ENCODE measurements at regions of chr18 and their contacts with region 1.

Region 1: DNA sequence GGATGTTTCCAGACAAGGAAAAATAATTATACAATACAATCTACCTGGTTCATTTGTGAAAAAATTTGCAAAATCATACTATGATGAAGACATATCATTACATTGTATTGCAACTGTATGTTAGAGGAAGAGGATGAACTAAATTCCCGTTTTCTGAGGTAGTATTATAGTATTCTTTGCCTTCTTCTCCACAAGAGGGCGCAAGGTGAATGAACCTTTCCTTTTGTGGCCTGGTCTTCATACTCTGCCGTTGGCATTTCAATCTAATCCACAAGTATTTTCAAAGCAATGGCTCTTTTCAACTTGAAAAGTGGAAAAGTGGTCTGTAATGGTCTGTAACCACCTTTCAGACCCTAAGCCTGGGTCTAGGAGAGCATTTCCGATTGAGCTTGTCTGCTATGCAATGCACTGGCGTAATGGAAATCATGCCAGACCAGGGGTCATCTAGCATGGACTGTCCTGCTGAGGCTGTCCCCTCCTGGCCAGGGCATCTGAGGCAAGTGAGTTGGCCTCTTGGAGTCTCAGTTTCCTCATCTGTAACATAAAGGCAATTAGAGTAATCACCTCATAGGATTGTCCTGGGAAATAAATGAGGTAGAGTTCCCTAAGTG is 30.8 kb upstream of the ZNF396 start:
- DNase-seq: peak in 1 of 2 donors; percentile 68
- ATAC-seq: peak; percentile 71 to 92 (median 79)
- H3K4me3 ChIP-seq: no peak overlapping the region
- H3K27ac ChIP-seq: no peak overlapping the region
- H3K4me1 ChIP-seq: peaks cover 0 to 16% (median 0%) of the 10 kb centered on the region in 9 donors
- H3K27me3 ChIP-seq: no peaks in the 10 kb centered on the region
- CTCF ChIP-seq: peak; percentile 47 to 88 (median 85)

Region 2: GRCh38 chr18:35459005-35459441 is 51.0 kb after region 1 on chr18:
- intact Hi-C with region 1: no loop called
- DNase-seq: peak; percentile 65 to 77
- ATAC-seq: peak; percentile 83 to 97 (median 93)
- H3K4me3 ChIP-seq: no peak overlapping the region
- H3K27ac ChIP-seq: peak overlapping the region in 9 of 10 donors; percentile 56 to 76 (median 70)
- H3K4me1 ChIP-seq: peaks cover 12 to 64% (median 55%) of the 10 kb centered on the region in 9 donors
- H3K27me3 ChIP-seq: no peaks in the 10 kb centered on the region
- CTCF ChIP-seq: no peak

Region 3: GRCh38 chr18:35491700-35492077 is 83.7 kb after region 1 on chr18:
- intact Hi-C with region 1: loop called in 6 of 10 experiments (anchors 2 to 5 kb)
- DNase-seq: no peak
- ATAC-seq: peak in 6 of 8 donors; percentile 45 to 72 (median 64)
- H3K4me3 ChIP-seq: no peak overlapping the region
- H3K27ac ChIP-seq: peak overlapping the region in 4 of 10 donors; percentile 24 to 69 (median 46)
- H3K4me1 ChIP-seq: peaks cover 0 to 41% (median 26%) of the 10 kb centered on the region in 9 donors
- H3K27me3 ChIP-seq: no peaks in the 10 kb centered on the region
- CTCF ChIP-seq: no peak

Region 4: GRCh38 chr18:35497370-35498197 is 89.6 kb after region 1 on chr18 and contains the start of gene INO80C:
- intact Hi-C with region 1: loop called in 7 of 10 experiments (anchors 2 to 5 kb)
- DNase-seq: peak; percentile 93 to 94
- ATAC-seq: peak; percentile 98 to 99 (median 99)
- H3K4me3 ChIP-seq: peak within 1 kb of the TSS; percentile 4 to 69 (median 64)
- H3K27ac ChIP-seq: peak within 1 kb of the TSS; percentile 88 to 97 (median 95)
- H3K4me1 ChIP-seq: peaks cover 0 to 30% (median 18%) of the 10 kb centered on the region in 9 donors
- H3K27me3 ChIP-seq: no peaks in the 10 kb centered on the region
- CTCF ChIP-seq: no peak
- total RNA-seq, gene INO80C: 19.5 to 28.4 (median 25.5) TPM

Region 5: DNA sequence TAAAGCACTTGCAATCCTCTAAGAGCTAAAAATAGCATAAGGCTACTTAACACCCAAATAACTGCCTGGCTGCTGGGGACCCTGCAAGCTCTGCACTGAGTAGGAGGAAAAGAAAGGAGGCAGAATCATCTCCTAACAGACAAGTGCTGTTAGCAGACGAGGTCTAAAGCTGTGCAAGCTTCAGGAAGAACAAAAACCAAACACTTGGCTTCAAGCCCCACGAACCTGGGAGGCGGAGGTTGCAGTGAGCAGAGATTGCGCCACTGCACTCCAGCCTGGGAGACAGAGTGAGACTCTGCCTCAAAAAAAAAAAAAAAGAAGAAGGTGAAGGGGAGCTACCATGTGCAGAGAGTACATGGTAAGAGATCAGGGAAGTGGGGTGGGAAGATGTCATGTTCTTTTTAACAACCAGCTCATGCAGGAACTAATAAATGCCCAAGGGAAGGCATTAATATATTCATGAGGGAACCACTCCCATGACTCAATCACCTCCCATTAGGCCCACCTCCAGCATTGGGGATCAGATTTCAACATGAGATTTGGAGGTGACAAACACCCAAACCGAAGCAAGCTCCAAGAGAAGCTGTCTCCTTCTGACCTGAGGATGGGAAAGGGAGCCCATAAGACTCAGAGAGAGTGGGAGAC is 118.6 kb after region 1 on chr18:
- intact Hi-C with region 1: no loop called
- DNase-seq: no peak
- ATAC-seq: peak; percentile 17 to 65 (median 52)
- H3K4me3 ChIP-seq: peak overlapping the region in 5 of 10 donors; percentile 1 to 27 (median 16)
- H3K27ac ChIP-seq: peak overlapping the region in 6 of 10 donors; percentile 16 to 64 (median 24)
- H3K4me1 ChIP-seq: peaks cover 7 to 47% (median 24%) of the 10 kb centered on the region in 9 donors
- H3K27me3 ChIP-seq: no peaks in the 10 kb centered on the region
- CTCF ChIP-seq: no peak

Region 6: GRCh38 chr18:35713545-35713944 is 305.6 kb after region 1 on chr18:
- intact Hi-C with region 1: loop called in 1 of 10 experiments (anchors 10 kb)
- DNase-seq: no peak
- ATAC-seq: no peak
- H3K4me3 ChIP-seq: no peak overlapping the region
- H3K27ac ChIP-seq: no peak overlapping the region
- H3K4me1 ChIP-seq: no peaks in the 10 kb centered on the region
- H3K27me3 ChIP-seq: no peaks in the 10 kb centered on the region
- CTCF ChIP-seq: no peak

Region 7: GRCh38 chr18:35730691-35731370 is 322.9 kb after region 1 on chr18:
- intact Hi-C with region 1: loop called in 1 of 10 experiments (anchors 10 kb)
- DNase-seq: peak in 1 of 2 donors; percentile 21
- ATAC-seq: peak in 7 of 8 donors; percentile 48 to 80 (median 60)
- H3K4me3 ChIP-seq: peak overlapping the region in 2 of 10 donors; percentile 12 to 19
- H3K27ac ChIP-seq: peak overlapping the region in 5 of 10 donors; percentile 1 to 87 (median 7)
- H3K4me1 ChIP-seq: peaks cover 0 to 41% (median 11%) of the 10 kb centered on the region in 9 donors
- H3K27me3 ChIP-seq: no peaks in the 10 kb centered on the region
- CTCF ChIP-seq: no peak

Region 8: DNA sequence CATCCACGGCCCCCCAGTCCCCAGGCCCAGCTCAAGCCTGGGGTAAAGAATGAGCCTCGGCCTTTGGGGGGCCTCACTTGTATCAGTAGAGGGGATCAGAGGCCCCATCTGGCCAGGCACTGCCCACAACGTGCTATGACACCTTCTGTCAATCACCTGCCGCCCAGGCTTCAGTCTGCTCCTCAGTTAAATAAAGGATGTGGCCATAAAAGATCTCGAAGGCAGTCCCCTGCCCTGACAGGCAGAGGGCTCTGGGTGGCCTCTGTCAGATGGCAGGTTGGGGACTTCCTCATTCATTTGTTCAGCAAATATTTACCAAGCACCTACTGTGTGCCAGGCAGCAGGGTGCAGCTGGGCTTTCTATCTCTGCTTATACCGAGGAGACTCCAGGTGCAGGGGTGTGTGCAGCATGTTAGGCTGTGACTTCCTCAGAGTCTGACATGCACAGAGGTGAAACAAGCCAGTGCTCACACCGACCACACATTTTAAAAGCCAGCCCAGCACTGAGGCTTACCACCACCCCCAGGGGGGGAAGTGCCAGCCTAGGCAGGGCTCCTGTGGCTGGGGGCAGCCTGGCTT is 340.0 kb after region 1 on chr18:
- intact Hi-C with region 1: loop called in 3 of 10 experiments (anchors 10 kb)
- DNase-seq: no peak
- ATAC-seq: no peak
- H3K4me3 ChIP-seq: no peak overlapping the region
- H3K27ac ChIP-seq: no peak overlapping the region
- H3K4me1 ChIP-seq: no peaks in the 10 kb centered on the region
- H3K27me3 ChIP-seq: no peaks in the 10 kb centered on the region
- CTCF ChIP-seq: no peak

Region 9: DNA sequence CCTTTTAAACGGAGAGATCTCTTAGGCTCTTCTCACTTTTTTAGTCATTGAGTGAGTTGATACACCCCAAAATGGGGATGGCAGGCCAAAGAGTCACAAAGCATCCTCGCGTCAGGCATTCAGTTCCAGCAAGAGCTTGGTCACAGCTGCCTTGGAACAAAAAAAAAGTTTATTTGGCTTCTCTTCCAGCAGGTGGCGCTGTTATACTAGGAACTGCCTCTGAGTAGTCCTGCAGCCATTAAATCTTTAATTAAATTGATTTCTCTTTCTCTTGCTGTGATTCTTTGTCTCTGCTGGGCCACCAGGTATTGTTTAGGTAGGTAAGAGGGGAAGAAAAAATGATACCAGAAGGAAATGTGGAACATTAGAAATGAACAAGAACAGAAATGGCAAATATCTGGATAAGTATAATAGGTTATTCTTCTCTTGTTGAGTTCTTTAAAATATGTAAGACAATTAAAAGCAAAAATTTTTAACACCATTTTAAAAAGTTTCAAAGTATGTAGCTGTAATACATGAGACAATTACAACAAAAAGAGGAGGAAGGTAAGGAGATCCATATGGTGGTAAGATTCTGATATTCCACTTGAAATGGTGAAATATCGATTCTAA is 348.6 kb after region 1 on chr18:
- intact Hi-C with region 1: loop called in 2 of 10 experiments (anchors 10 kb)
- DNase-seq: peak in 1 of 2 donors; percentile 71
- ATAC-seq: peak; percentile 73 to 88 (median 79)
- H3K4me3 ChIP-seq: no peak overlapping the region
- H3K27ac ChIP-seq: no peak overlapping the region
- H3K4me1 ChIP-seq: no peaks in the 10 kb centered on the region
- H3K27me3 ChIP-seq: no peaks in the 10 kb centered on the region
- CTCF ChIP-seq: peak; percentile 74 to 86 (median 81)

Measured in heart right ventricle (tissue), 16 donors.